Activated B cell treated with CpG ODN at 0.5 μM for 24 hours (primary cell): ENCODE measurements at regions of chr1 and their contacts with region 1.

Region 1: GRCh38 chr1:244272471-244273261 is 179.0 kb downstream of the ADSS2 start:
- DNase-seq: peak; percentile 50
- ATAC-seq: peak; percentile 96
- H3K4me3 Mint-ChIP-seq: no peak overlapping the region
- H3K27ac Mint-ChIP-seq: no peak overlapping the region
- H3K4me1 Mint-ChIP-seq: peaks cover 21% of the 10 kb centered on the region
- H3K27me3 Mint-ChIP-seq: no peaks in the 10 kb centered on the region
- CTCF ChIP-seq: peak; percentile 92

Region 2: DNA sequence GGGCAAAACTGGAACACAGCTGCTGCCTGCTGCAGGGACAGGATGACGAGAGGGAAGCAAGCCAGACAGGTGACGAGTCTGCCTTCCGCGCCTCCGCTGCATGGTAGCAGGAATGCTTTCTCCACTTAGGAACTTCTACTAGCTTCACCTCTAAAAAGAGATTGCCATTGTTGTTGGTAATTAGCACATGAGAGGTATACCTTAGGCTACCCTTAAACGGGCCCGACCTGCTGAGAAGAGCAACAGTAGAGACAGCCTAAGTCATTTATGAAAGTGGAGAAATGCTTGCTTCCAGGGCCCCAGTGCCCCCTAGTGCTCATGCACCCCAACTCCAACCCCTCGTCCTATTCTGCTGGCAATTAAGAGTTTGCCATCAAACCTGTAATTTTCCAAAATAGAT is 325.7 kb before region 1 on chr1:
- CTCF ChIA-PET with region 1: no interaction called
- POLR2A ChIA-PET with region 1: no interaction called
- intact Hi-C with region 1: loop called (anchors 2 kb)
- DNase-seq: no peak
- ATAC-seq: no peak
- H3K4me3 Mint-ChIP-seq: no peak overlapping the region
- H3K27ac Mint-ChIP-seq: no peak overlapping the region
- H3K4me1 Mint-ChIP-seq: no peaks in the 10 kb centered on the region
- H3K27me3 Mint-ChIP-seq: peaks cover 7% of the 10 kb centered on the region
- CTCF ChIP-seq: no peak